Posterior vena cava (tissue), 2 donors: ENCODE measurements at regions of chr4 and their contacts with region 1.

Region 1: GRCh38 chr4:101191302-101192098 is 155.8 kb downstream of the PPP3CA start:
- DNase-seq: peak; percentile 90

Region 2: DNA sequence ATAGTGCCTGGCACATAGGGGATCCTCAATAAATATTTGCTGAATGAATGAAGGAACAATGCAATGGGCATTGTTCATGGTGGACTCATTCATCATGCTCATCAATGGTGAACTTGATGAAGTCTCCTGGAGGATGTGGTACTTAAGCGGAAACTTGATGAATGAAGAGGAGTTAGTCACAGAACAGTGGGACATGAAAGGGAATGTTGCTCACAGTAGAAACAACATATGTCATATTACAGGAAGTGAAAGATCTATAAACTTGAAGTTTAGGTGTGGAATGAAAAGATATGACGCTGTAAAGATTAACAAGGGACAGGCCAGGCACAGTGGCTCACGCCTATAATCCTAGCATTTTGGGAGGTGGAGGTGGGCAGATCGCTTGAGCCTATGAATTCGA is 68.3 kb before region 1 on chr4:
- intact Hi-C with region 1: loop called in 1 of 2 experiments (anchors 2 kb)
- DNase-seq: no peak